Naive thymus-derived CD4-positive, alpha-beta T cell (primary cell): ENCODE measurements at regions of chr18 and their contacts with region 1.

Region 1: GRCh38 chr18:13611601-13612195 is 114.7 kb downstream of the FAM210A start:
- DNase-seq: peak in 3 of 9 donors; percentile 8 to 17 (median 11)
- ATAC-seq: peak; percentile 2
- H3K4me3 ChIP-seq: peak overlapping the region; percentile 36
- H3K4me3 Mint-ChIP-seq: peak overlapping the region; percentile 82 to 97 (median 90)
- H3K27ac ChIP-seq: peak overlapping the region; percentile 61
- H3K27ac Mint-ChIP-seq: peak overlapping the region; percentile 77 to 96 (median 86)
- H3K4me1 ChIP-seq: peaks cover 34 to 49% of the 10 kb centered on the region in 2 donors
- H3K4me1 Mint-ChIP-seq: peaks cover 55 to 82% (median 73%) of the 10 kb centered on the region in 7 donors
- H3K27me3 ChIP-seq: no peaks in the 10 kb centered on the region
- H3K27me3 Mint-ChIP-seq: no peaks in the 10 kb centered on the region

Region 2: GRCh38 chr18:12702221-12703095 is 909.2 kb before region 1 on chr18 and contains the starts of genes CEP76 and PSMG2:
- CTCF ChIA-PET with region 1: no interaction called
- POLR2A ChIA-PET with region 1: no interaction called
- intact Hi-C with region 1: loop called in 1 of 2 experiments (anchors 5 kb)
- DNase-seq: peak; percentile 77 to 88 (median 84)
- ATAC-seq: peak; percentile 89
- H3K4me3 ChIP-seq: peak within 1 kb of the TSS; percentile 97
- H3K4me3 Mint-ChIP-seq: peak within 1 kb of the TSS; percentile 92 to 99 (median 98)
- H3K27ac ChIP-seq: peak within 1 kb of the TSS; percentile 96
- H3K27ac Mint-ChIP-seq: peak within 1 kb of the TSS; percentile 91 to 100 (median 96)
- H3K4me1 ChIP-seq: peaks cover 17 to 20% of the 10 kb centered on the region in 2 donors
- H3K4me1 Mint-ChIP-seq: peaks cover 36 to 63% (median 50%) of the 10 kb centered on the region in 7 donors
- H3K27me3 ChIP-seq: no peaks in the 10 kb centered on the region
- H3K27me3 Mint-ChIP-seq: no peaks in the 10 kb centered on the region
- total RNA-seq, gene CEP76: 6.9 to 13.2 (median 11.1) TPM
- total RNA-seq, gene PSMG2: 49.9 to 104 (median 59.9) TPM

Region 3: DNA sequence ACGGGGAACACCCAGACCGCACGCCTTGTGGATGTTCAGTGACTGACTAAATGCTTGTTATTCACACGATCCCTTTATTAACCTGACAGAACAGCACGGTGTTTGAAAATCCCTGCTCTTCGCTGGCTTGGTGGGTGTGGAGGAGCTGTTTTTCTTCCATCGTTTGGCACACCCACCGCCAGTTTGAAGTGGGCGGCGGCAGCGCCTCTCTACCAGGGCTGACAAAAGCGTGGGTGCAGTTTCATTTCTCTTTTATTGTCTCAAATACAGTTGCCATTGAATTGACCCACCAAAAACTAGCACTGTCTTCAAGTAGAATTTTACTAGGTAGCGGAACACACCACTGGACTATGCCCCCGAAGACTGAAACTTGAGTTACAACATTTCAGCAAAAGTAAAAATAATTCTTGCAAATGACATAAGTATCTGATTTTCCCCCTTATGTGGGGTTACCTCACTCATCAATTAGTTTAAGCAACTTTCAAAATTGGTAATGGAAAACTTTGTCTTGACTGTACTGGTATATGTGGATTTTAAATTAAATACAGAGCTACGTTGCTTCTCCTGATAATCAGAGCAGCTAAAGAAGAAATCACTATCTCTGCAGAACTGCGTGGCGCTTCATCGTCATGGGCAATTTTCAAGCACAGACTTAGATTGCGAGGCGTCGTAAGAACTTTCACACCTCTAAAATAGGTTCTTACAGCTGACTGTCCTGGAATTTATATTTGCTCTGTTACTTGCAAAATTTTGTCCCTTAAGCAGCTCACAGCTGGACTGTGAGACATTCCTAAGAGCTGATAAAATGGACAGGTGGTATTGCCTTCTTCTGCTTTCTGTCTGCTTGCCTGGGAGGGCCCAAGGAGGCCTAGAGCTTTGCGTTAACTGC is 332.3 kb before region 1 on chr18:
- CTCF ChIA-PET with region 1: interaction called, 4 read pairs
- POLR2A ChIA-PET with region 1: no interaction called
- intact Hi-C with region 1: loop called in 1 of 2 experiments (anchors 5 kb)
- DNase-seq: peak in 8 of 9 donors; percentile 26 to 52 (median 40)
- ATAC-seq: peak; percentile 61
- H3K4me3 ChIP-seq: peak overlapping the region; percentile 27
- H3K4me3 Mint-ChIP-seq: peak overlapping the region; percentile 72 to 91 (median 85)
- H3K27ac ChIP-seq: peak overlapping the region; percentile 66
- H3K27ac Mint-ChIP-seq: peak overlapping the region; percentile 63 to 94 (median 89)
- H3K4me1 ChIP-seq: peaks cover 2 to 19% of the 10 kb centered on the region in 2 donors
- H3K4me1 Mint-ChIP-seq: peaks cover 9 to 84% (median 71%) of the 10 kb centered on the region in 7 donors
- H3K27me3 ChIP-seq: no peaks in the 10 kb centered on the region
- H3K27me3 Mint-ChIP-seq: no peaks in the 10 kb centered on the region

Region 4: DNA sequence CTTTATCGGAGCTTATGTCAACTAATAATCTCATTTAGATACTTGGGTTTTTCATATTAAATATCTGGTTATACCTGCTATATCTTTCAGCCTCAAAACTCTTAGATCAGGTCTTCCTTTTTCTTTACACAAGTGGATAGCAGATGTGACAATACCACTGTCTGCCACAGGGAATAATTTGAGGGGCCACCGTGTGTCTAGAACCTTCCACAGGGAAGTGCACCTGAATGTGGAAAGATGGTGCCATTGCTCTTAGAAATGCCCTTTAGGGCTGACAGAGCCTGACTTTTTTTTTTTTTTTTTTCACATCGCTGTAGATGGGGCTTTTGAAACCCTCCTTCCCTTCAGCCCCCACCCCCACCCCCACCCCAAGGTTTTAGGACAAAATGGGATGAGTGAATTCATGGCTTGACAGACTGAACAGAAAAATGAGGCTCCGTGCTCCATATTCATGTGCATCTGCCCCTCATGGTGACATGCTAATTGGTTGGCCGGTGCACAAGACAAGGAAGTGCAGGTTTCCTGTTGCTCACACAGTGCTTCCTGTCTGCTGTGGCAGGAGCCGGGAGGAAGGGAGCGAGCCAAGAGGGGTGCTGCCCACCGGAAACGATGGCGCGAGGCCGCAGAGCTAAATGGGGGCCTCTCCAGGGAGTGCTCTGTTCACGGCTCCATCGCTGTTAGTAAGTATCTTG is 147.1 kb before region 1 on chr18:
- CTCF ChIA-PET with region 1: no interaction called
- POLR2A ChIA-PET with region 1: no interaction called
- intact Hi-C with region 1: loop called (anchors 5 to 10 kb)
- DNase-seq: peak; percentile 37 to 70 (median 64)
- ATAC-seq: peak; percentile 93
- H3K4me3 ChIP-seq: peak overlapping the region; percentile 66
- H3K4me3 Mint-ChIP-seq: peak overlapping the region; percentile 87 to 100 (median 94)
- H3K27ac ChIP-seq: peak overlapping the region; percentile 66
- H3K27ac Mint-ChIP-seq: peak overlapping the region; percentile 88 to 99 (median 95)
- H3K4me1 ChIP-seq: peaks cover 16 to 45% of the 10 kb centered on the region in 2 donors
- H3K4me1 Mint-ChIP-seq: peaks cover 43 to 85% (median 83%) of the 10 kb centered on the region in 7 donors
- H3K27me3 ChIP-seq: no peaks in the 10 kb centered on the region
- H3K27me3 Mint-ChIP-seq: no peaks in the 10 kb centered on the region

Region 5: GRCh38 chr18:13551841-13552733 is 59.6 kb before region 1 on chr18:
- CTCF ChIA-PET with region 1: no interaction called
- POLR2A ChIA-PET with region 1: no interaction called
- intact Hi-C with region 1: no loop called
- DNase-seq: no peak
- ATAC-seq: no peak
- H3K4me3 ChIP-seq: no peak overlapping the region
- H3K4me3 Mint-ChIP-seq: no peak overlapping the region
- H3K27ac ChIP-seq: no peak overlapping the region
- H3K27ac Mint-ChIP-seq: peak overlapping the region in 1 of 9 donors; percentile 82
- H3K4me1 ChIP-seq: no peaks in the 10 kb centered on the region
- H3K4me1 Mint-ChIP-seq: peaks cover 0 to 33% (median 17%) of the 10 kb centered on the region in 7 donors
- H3K27me3 ChIP-seq: no peaks in the 10 kb centered on the region
- H3K27me3 Mint-ChIP-seq: no peaks in the 10 kb centered on the region

Region 6: DNA sequence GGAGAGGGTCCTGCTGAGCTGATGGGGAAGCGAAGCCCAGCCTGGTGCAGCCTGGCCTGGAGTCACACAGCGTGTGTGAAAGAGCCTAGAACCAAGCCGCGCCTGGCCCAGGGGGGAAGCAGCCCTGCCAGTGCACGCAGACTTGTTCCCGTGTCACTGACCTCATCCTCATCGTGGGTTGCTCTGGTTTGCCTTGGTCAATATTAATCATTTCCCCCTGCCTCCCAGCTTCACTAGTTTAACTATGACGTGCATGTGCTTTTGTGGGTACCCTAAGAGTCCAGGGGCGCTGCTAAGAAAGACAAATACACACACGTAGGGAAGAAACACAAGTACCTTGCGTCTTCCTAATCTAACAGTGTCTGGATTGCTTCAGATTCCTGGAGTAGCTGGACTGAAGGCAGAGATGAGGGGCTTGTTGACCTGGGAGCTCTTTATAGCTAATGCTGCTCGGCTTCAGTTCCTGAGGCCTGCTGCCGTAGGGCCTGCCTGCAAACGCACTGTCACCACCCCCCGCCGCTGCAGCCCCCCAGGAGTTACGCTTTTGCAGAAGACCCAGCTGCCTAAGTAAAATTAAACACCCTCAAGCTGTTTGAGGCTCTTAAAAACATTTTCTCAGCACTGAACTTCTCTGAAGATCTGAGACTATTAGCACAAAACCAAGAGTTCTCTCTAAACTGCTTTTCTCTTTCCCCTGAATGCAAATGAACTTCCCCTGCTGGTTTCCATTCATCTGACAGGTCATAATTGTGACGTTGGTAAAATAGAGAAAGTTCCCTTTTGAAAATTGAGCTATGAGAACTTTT is 44.6 kb before region 1 on chr18:
- CTCF ChIA-PET with region 1: no interaction called
- POLR2A ChIA-PET with region 1: no interaction called
- intact Hi-C with region 1: loop called in 1 of 2 experiments (anchors 2 kb)
- DNase-seq: peak in 2 of 9 donors; percentile 9 to 20
- ATAC-seq: peak; percentile 75
- H3K4me3 ChIP-seq: no peak overlapping the region
- H3K4me3 Mint-ChIP-seq: peak overlapping the region in 8 of 10 donors; percentile 7 to 56 (median 22)
- H3K27ac ChIP-seq: no peak overlapping the region
- H3K27ac Mint-ChIP-seq: peak overlapping the region in 4 of 9 donors; percentile 43 to 84 (median 60)
- H3K4me1 ChIP-seq: peaks cover 0 to 6% of the 10 kb centered on the region in 2 donors
- H3K4me1 Mint-ChIP-seq: peaks cover 21 to 67% (median 43%) of the 10 kb centered on the region in 7 donors
- H3K27me3 ChIP-seq: no peaks in the 10 kb centered on the region
- H3K27me3 Mint-ChIP-seq: no peaks in the 10 kb centered on the region

Region 7: GRCh38 chr18:13597068-13597467 is 14.6 kb before region 1 on chr18:
- CTCF ChIA-PET with region 1: interaction called, 3 read pairs
- POLR2A ChIA-PET with region 1: interaction called, 4 read pairs
- intact Hi-C with region 1: loop called in 1 of 2 experiments (anchors 2 kb)
- DNase-seq: no peak
- ATAC-seq: no peak
- H3K4me3 ChIP-seq: no peak overlapping the region
- H3K4me3 Mint-ChIP-seq: peak overlapping the region in 1 of 10 donors; percentile 4
- H3K27ac ChIP-seq: no peak overlapping the region
- H3K27ac Mint-ChIP-seq: no peak overlapping the region
- H3K4me1 ChIP-seq: no peaks in the 10 kb centered on the region
- H3K4me1 Mint-ChIP-seq: peaks cover 0 to 19% (median 15%) of the 10 kb centered on the region in 7 donors
- H3K27me3 ChIP-seq: no peaks in the 10 kb centered on the region
- H3K27me3 Mint-ChIP-seq: no peaks in the 10 kb centered on the region